CD14-positive monocyte (primary cell): ENCODE measurements at regions of chr20 and their contacts with region 1.

Region 1: GRCh38 chr20:38935285-38935684 is 9.1 kb downstream of the FAM83D start:
- DNase-seq: no peak
- H3K4me3 ChIP-seq: no peak overlapping the region
- H3K4me3 Mint-ChIP-seq: no peak overlapping the region
- H3K27ac ChIP-seq: no peak overlapping the region
- H3K27ac Mint-ChIP-seq: peak overlapping the region in 3 of 7 donors; percentile 37 to 57 (median 40)
- H3K4me1 ChIP-seq: no peaks in the 10 kb centered on the region
- H3K4me1 Mint-ChIP-seq: peaks cover 19% of the 10 kb centered on the region
- H3K27me3 ChIP-seq: no peaks in the 10 kb centered on the region
- H3K27me3 Mint-ChIP-seq: peaks cover 0 to 1% (median 0%) of the 10 kb centered on the region in 3 donors
- CTCF ChIP-seq: no peak

Region 2: GRCh38 chr20:39049684-39050554 is 114.6 kb after region 1 on chr20:
- intact Hi-C with region 1: loop called in 1 of 2 experiments (anchors 10 kb)
- DNase-seq: peak; percentile 60 to 72 (median 71)
- H3K4me3 ChIP-seq: peak overlapping the region; percentile 46 to 95 (median 68)
- H3K4me3 Mint-ChIP-seq: peak overlapping the region; percentile 89 to 97
- H3K27ac ChIP-seq: peak overlapping the region in 1 of 2 donors; percentile 64
- H3K27ac Mint-ChIP-seq: peak overlapping the region in 4 of 7 donors; percentile 14 to 76 (median 34)
- H3K4me1 ChIP-seq: peaks cover 9 to 13% of the 10 kb centered on the region in 2 donors
- H3K4me1 Mint-ChIP-seq: peaks cover 8% of the 10 kb centered on the region
- H3K27me3 ChIP-seq: no peaks in the 10 kb centered on the region
- H3K27me3 Mint-ChIP-seq: peaks cover 4 to 9% (median 5%) of the 10 kb centered on the region in 3 donors
- CTCF ChIP-seq: peak; percentile 99